Body of pancreas (tissue), 4 donors: ENCODE measurements at regions of chr2 and their contacts with region 1.

Region 1: DNA sequence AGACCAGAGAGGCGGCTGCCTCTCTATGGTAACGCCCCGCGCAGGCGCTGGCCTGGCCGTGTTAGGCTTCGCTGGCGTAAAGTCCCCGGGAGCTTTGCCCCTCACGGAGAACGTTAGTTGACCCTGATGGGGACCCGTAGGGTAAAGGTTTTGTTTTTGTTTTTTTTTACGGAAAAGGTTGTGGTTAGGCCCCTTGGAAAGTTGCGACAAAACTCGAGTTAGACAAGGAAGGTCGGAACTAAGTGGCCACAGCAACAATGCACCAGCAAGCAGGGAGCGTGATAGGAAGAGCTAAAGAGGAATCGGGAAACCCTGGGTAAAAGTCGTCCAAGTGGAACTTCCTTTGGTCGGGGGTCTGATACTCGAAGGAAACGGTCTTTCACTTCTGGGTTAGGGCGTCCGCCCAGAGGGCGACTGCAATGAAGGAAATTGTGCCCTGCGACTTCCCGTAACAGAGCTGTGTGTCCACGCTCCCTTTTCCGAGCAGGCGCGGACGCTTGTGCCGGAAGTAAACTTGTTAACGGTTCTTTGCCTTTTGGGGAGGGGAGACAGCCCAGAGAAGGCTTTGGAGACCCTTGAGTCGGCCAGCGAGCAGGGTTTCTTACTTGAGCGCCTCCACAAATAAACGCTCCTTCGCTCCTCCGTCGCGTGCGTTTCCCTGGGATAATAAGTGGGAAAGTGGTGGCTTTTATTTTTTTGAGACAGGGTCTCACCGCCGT is 493 bp upstream of the CLASP1 start:
- DNase-seq: peak; percentile 87 to 99 (median 98)
- ATAC-seq: peak; percentile 98
- H3K4me3 ChIP-seq: peak overlapping the region; percentile 46 to 82
- H3K27ac ChIP-seq: peak overlapping the region; percentile 74 to 99 (median 92)
- H3K4me1 ChIP-seq: peaks cover 39% of the 10 kb centered on the region
- H3K27me3 ChIP-seq: no peaks in the 10 kb centered on the region
- CTCF ChIP-seq: no peak
- POLR2A ChIP-seq: peak in 2 of 3 donors; percentile 67

Region 2: GRCh38 chr2:121529439-121530211 is 120.1 kb before region 1 on chr2:
- intact Hi-C with region 1: loop called (anchors 10 kb)
- DNase-seq: peak; percentile 58 to 75 (median 66)
- ATAC-seq: peak; percentile 24
- H3K4me3 ChIP-seq: peak overlapping the region; percentile 54 to 79
- H3K27ac ChIP-seq: peak overlapping the region; percentile 97 to 99 (median 98)
- H3K4me1 ChIP-seq: peaks cover 44% of the 10 kb centered on the region
- H3K27me3 ChIP-seq: no peaks in the 10 kb centered on the region
- CTCF ChIP-seq: no peak
- POLR2A ChIP-seq: no peak